ENCODE measurements at regions of chr10 and their contacts with region 1.

Region 1: DNA sequence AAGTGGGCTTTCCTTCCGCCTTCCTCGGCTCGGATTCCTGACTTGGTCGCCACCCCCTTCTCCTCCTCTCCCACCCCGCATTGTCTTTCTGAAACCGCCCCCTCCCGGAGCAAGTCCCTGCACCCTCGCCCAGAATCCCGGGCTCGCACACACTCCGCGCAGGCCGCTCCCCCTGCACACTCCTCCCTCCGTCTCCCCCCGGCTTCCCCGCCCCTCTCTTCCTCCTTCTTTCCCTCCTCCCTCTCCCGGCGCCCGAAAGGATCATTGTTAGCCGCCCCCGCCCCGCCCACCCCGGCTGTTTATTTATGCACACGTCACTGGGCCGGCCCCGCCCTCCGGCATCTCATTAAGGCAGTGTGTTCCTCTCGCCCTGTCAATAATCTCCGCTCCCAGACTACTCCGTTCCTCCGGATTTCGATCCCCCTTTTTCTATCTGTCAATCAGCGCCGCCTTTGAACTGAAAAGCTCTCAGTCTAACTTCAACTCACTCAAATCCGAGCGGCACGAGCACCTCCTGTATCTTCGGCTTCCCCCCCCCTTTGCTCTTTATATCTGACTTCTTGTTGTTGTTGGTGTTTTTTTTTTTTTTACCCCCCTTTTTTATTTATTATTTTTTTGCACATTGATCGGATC is at the start of gene TCF7L2:
- DNase-seq: peak; percentile 96
- H3K4me3 ChIP-seq: peak within 1 kb of the TSS; percentile 61 to 91 (median 86)
- H3K27ac ChIP-seq: peak within 1 kb of the TSS; percentile 95 to 98 (median 96)
- H3K4me1 ChIP-seq: peaks cover 11 to 57% (median 44%) of the 10 kb centered on the region in 4 donors
- H3K27me3 ChIP-seq: no peaks in the 10 kb centered on the region
- CTCF ChIP-seq: no peak
- EP300 ChIP-seq: no peak
- POLR2A ChIP-seq: peak; percentile 85
- total RNA-seq, gene TCF7L2: 84.6 to 249 (median 137) TPM

Region 2: DNA sequence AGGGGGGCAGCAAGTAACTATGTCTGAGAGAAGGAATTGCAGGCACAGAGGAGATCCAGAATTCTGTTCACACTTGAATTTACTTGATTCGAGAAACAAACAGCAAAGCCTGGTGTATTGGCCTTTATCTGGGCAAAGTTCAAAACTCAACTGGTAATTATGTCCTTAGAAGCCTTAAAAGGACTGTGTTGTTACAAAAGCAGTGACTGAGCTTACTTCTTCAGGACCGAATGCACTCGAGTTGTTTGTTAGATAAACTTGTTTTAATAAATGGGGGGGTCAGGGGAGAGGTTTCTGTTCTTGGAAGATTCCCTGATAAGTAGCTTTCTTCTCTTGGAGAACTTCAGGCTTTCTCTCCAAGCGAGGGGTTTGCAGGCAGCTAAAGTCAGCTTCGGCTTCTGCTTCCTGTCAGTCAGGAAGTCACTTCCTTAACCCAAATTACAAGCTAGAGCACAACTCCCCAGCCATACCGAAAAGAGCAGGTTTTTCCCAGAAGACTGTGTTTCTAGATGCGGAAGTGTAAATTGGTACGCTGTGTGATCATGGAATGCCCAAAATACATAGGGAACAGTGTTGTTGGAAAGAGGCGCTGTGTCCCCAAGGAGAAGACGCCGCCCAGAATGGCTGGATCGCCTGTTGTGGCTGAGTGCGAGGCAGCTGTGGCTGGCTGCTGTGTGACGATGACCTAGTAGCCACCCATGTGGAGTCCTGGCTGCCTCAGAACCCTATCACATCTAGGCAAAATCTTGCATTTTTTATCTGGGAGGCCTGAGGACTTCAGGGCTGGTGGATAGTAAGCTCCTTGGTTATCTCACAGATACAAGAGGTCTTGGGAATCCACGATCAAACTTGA is 110.4 kb after region 1 on chr10:
- in situ Hi-C with region 1: no loop called
- intact Hi-C with region 1: loop called (anchors 10 kb)
- DNase-seq: peak; percentile 44
- H3K4me3 ChIP-seq: peak overlapping the region in 2 of 4 donors; percentile 6 to 18
- H3K27ac ChIP-seq: peak overlapping the region; percentile 81 to 86 (median 84)
- H3K4me1 ChIP-seq: peaks cover 42 to 84% (median 48%) of the 10 kb centered on the region in 4 donors
- H3K27me3 ChIP-seq: no peaks in the 10 kb centered on the region
- CTCF ChIP-seq: no peak
- EP300 ChIP-seq: no peak
- POLR2A ChIP-seq: no peak

Region 3: DNA sequence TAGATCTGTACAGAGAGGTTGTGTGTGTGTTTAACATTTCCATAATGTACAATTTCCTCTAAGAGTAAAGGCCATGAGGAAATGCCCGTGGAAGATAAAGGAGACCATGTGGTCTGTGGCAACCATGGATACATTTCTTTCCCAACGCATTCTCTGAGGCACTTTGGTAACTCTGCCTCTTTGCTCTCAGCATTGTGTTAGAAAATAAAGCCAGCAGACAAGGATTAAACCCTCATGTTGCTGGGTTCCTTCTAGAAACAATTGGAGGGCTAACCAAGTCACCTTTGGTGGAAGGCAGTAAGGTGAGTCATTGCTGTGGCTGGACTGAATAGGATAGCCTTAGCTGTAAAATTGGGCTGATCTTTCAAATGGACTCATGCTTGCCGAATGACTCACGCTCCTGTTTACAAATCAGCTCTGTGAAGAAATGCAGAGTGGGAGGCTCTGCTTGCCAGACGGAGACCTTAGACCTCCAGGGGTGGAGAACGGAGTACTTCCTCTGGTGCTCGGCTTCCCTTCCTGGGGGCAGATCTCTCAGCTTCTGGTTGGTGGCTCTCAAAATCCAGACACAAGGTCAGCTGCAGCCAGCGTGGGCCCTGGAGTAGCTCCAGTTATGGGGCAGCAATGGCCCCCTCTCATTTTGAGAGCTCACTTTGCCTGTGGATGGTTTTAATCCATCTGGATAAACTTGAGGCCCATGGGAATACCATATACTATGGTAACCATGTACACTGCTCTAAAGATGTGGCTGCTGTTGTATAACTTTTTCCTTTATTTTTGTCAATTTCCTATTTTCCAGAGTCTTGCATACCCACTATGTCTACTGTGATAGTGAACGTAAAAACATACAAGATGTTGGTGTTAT is 137.4 kb after region 1 on chr10:
- in situ Hi-C with region 1: loop called in 1 of 4 experiments (anchors 25 kb)
- intact Hi-C with region 1: no loop called
- DNase-seq: peak; percentile 80
- H3K4me3 ChIP-seq: no peak overlapping the region
- H3K27ac ChIP-seq: peak overlapping the region; percentile 72 to 84 (median 80)
- H3K4me1 ChIP-seq: peaks cover 9 to 82% (median 51%) of the 10 kb centered on the region in 4 donors
- H3K27me3 ChIP-seq: no peaks in the 10 kb centered on the region
- CTCF ChIP-seq: no peak
- EP300 ChIP-seq: peak; percentile 6
- POLR2A ChIP-seq: no peak

Region 4: GRCh38 chr10:113126229-113127201 is 176.5 kb after region 1 on chr10:
- in situ Hi-C with region 1: no loop called
- intact Hi-C with region 1: loop called (anchors 5 kb)
- DNase-seq: peak; percentile 66
- H3K4me3 ChIP-seq: peak overlapping the region in 3 of 4 donors; percentile 19 to 26 (median 19)
- H3K27ac ChIP-seq: peak overlapping the region in 2 of 4 donors; percentile 5 to 27
- H3K4me1 ChIP-seq: peaks cover 3 to 21% (median 4%) of the 10 kb centered on the region in 4 donors
- H3K27me3 ChIP-seq: no peaks in the 10 kb centered on the region
- CTCF ChIP-seq: peak in 4 of 5 experiments; percentile 34 to 69 (median 61)
- EP300 ChIP-seq: no peak
- POLR2A ChIP-seq: no peak

Measured in transverse colon (tissue), 4 donors.